ENCODE measurements at regions of chrX and their contacts with region 1.

Region 1: DNA sequence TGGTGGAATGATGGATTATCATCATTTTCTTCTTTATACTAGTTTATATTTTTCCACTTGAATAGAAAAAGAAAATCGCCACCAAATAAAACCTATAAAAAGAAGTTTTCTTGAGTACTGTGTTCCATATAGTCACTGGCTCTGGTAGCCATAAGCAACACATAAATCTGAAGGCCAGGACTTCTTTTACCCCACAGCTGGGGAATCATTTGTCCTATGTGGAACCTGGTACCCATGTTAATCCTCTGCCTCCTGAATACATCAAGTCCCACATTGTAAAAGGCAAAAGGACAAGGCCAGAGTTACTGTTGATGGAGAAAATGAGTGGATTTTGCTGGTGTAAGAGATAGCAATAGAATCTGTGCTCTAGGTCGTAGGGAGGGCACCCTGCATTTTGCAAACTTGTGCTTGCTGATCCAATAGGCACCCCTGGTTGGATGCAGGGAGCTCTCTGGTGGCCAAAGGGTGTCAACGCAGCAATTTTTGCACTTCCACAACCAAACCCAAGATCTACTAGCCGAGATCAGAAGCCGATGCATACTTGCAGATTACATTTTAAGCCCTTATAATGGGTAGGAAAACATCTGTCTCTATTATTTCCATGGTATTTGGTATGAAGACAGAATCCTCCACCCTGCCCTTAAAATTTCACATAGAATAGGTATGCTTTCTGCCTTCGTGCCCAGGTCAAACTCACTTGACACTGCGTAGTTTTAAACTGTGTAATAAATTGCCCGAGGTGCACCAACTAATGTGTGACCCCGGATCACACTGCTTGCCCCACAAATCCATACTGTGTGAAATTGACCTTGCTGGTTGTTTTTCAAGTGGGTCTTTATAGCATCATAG is 146.2 kb upstream of the SCML1 start:
- DNase-seq: no peak
- H3K4me3 Mint-ChIP-seq: no peak overlapping the region
- H3K27ac Mint-ChIP-seq: no peak overlapping the region
- H3K4me1 Mint-ChIP-seq: peaks cover 11% of the 10 kb centered on the region
- H3K27me3 Mint-ChIP-seq: peaks cover 2% of the 10 kb centered on the region

Region 2: DNA sequence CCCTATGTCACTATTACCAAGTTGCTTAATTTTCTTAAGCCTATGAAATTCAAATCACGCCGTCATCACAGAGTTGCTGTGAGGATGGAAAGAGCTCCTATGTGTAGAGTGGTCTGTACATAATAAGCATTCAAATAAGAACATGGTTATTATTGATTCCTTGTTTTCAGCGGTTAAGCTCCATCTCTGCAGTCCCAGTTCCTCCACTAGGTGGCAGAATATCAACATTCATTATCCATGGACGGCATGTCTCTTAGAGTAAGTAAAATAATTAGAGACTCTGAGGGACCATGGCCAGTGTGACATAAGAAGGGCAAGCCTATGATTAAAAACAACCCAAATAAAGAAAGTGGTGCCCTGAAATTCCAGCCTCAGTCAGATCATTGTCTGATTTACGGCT is 348.6 kb before region 1 on chrX:
- intact Hi-C with region 1: loop called (anchors 5 kb)
- DNase-seq: peak; percentile 6
- H3K4me3 Mint-ChIP-seq: no peak overlapping the region
- H3K27ac Mint-ChIP-seq: no peak overlapping the region
- H3K4me1 Mint-ChIP-seq: no peaks in the 10 kb centered on the region
- H3K27me3 Mint-ChIP-seq: no peaks in the 10 kb centered on the region

Region 3: DNA sequence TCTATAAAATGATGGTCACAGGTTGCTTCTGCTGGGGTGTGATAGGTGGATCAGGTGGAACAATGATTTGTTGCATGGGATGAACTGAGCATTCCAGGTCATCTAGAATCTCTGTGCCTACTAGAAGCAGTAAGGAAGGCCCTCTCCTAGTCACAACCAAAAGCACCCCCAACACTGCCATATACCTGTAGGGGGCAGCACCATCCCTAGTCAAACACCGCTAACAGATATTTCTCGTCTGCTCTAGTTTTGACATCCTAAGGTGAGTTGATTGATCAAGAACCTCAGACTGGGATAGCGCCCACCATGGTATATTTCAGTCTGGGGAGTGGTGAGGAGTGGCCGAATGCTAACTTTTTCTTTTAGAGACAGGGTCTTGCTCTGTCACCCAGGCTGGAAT is 55.9 kb before region 1 on chrX:
- intact Hi-C with region 1: loop called (anchors 1 kb)
- DNase-seq: no peak
- H3K4me3 Mint-ChIP-seq: no peak overlapping the region
- H3K27ac Mint-ChIP-seq: no peak overlapping the region
- H3K4me1 Mint-ChIP-seq: peaks cover 9% of the 10 kb centered on the region
- H3K27me3 Mint-ChIP-seq: no peaks in the 10 kb centered on the region

Region 4: GRCh38 chrX:17608898-17609297 is 17.8 kb after region 1 on chrX:
- intact Hi-C with region 1: no loop called
- DNase-seq: no peak
- H3K4me3 Mint-ChIP-seq: no peak overlapping the region
- H3K27ac Mint-ChIP-seq: no peak overlapping the region
- H3K4me1 Mint-ChIP-seq: peaks cover 3% of the 10 kb centered on the region
- H3K27me3 Mint-ChIP-seq: peaks cover 2% of the 10 kb centered on the region

Region 5: DNA sequence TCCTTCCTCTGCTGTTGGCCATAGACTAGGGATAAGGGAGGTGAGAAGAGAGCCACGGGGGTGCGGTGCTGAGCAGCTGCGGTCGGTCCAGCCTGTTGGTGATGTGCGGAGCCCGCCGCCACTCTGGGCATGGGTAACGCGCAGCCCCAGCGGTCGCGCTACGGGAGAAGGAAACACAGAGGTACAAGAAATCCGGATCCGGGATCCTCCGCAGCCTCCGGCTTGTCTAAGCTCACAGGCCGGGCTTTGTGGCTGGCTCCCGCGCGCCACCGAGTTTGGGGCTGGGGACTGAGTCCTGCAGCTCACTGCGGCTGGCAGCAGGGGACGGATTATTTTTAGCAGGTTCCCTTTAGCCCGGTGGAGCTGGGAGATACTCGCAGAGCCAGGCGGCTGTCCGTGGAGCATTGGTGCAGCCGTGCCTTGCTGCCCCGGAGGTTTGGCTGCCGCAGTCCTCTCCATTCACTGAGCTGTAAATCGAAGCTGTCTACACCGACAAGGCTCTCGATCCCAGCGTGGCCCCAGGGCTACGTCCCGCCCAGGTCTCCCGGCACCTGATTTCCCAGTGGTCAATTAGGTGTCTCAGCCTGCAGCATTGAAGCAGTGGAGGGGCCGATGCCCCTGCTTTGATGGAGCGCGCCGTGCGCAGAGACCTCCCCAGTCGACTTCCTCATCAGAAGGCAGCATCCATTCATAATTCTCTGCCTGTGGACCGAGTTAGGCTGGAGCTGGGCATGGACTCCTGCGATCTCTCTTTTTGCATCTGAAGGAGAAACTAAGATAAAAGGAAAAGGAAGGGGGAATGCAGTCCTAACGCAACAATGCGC is 64.3 kb after region 1 on chrX:
- intact Hi-C with region 1: loop called (anchors 10 kb)
- DNase-seq: peak; percentile 8
- H3K4me3 Mint-ChIP-seq: peak overlapping the region; percentile 82
- H3K27ac Mint-ChIP-seq: peak overlapping the region; percentile 72
- H3K4me1 Mint-ChIP-seq: peaks cover 18% of the 10 kb centered on the region
- H3K27me3 Mint-ChIP-seq: peaks cover 7% of the 10 kb centered on the region

Region 6: DNA sequence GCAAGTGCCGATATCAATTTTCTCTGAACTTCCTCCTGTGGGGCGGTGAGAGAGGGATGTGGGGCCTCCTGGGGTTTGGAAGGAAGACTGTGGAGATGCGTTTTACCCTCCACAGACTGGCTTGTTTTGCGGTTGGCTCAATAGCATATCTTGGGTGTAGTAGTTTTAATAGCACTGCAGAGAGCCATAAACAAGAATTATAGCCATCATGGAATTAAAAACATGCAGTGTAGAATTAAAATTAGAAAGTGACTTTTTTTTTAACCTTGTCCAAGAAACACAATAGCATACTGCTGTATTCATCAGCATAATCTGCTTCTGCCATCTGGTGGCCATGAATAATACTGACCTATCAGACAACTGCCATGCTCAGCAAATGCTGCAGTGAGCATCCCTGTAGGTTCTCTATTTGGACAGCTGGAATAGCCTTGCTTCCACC is 98.9 kb after region 1 on chrX:
- intact Hi-C with region 1: loop called (anchors 2 kb)
- DNase-seq: no peak
- H3K4me3 Mint-ChIP-seq: no peak overlapping the region
- H3K27ac Mint-ChIP-seq: no peak overlapping the region
- H3K4me1 Mint-ChIP-seq: no peaks in the 10 kb centered on the region
- H3K27me3 Mint-ChIP-seq: no peaks in the 10 kb centered on the region

Measured in activated T-helper 2 cell treated with anti-CD3 and anti-CD28 coated beads, Interferon-gamma antibody, Interleukin-2, Interleukin-4, amounts not matched to agents 10 μg/mL and 5 μg/mL and 100 μg/mL, durations not matched to agents 14 hours and 24 hours and 36 hours (primary cell).